ENCODE measurements at regions of chr12 and their contacts with region 1.

Region 1: GRCh38 chr12:89542912-89543592 is 17.2 kb upstream of the POC1B start:
- DNase-seq: peak; percentile 67 to 89 (median 70)
- ATAC-seq: peak; percentile 81
- H3K4me3 ChIP-seq: no peak overlapping the region
- H3K27ac ChIP-seq: no peak overlapping the region
- H3K4me1 ChIP-seq: peaks cover 11 to 48% of the 10 kb centered on the region in 2 experiments
- H3K27me3 ChIP-seq: no peaks in the 10 kb centered on the region
- CTCF ChIP-seq: peak; percentile 77 to 92 (median 84)
- EP300 ChIP-seq: no peak
- POLR2A ChIP-seq: no peak
- RAD21 ChIP-seq: peak; percentile 95

Region 2: DNA sequence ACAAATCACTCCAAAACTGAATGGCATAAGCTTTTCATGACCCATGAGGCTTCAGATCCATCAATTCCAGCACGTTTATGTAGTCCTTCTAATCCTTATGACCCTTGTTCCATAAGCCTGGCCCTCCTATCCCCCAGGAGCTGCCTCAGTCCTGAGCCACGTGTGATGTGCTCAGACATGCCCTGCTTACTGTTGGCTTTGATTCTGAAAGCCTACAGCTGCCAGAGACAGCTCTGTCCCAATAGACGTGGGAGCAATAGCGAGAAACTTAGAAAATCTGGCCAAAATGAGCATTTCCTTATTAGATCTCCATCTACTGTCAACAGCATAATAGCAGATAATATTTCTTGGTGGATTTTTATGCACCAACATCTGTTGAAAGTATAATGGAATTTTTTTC is 223.9 kb before region 1 on chr12:
- CTCF ChIA-PET with region 1: no interaction called
- POLR2A ChIA-PET with region 1: no interaction called
- in situ Hi-C with region 1: no loop called
- intact Hi-C with region 1: no loop called
- DNase-seq: no peak
- ATAC-seq: no peak
- H3K4me3 ChIP-seq: no peak overlapping the region
- H3K27ac ChIP-seq: no peak overlapping the region
- H3K4me1 ChIP-seq: peaks cover 0 to 2% of the 10 kb centered on the region in 2 experiments; a peak in 2 of 5 replicates
- H3K27me3 ChIP-seq: no peaks in the 10 kb centered on the region
- CTCF ChIP-seq: no peak
- EP300 ChIP-seq: no peak
- POLR2A ChIP-seq: no peak
- RAD21 ChIP-seq: no peak

Region 3: GRCh38 chr12:89504560-89505346 is 38.3 kb before region 1 on chr12:
- CTCF ChIA-PET with region 1: no interaction called
- POLR2A ChIA-PET with region 1: no interaction called
- in situ Hi-C with region 1: no loop called
- intact Hi-C with region 1: no loop called
- DNase-seq: no peak
- ATAC-seq: peak; percentile 50; the same call in 1 of the 3 replicates
- H3K4me3 ChIP-seq: no peak overlapping the region
- H3K27ac ChIP-seq: no peak overlapping the region
- H3K4me1 ChIP-seq: no peaks in the 10 kb centered on the region
- H3K27me3 ChIP-seq: no peaks in the 10 kb centered on the region
- CTCF ChIP-seq: no peak
- EP300 ChIP-seq: no peak
- POLR2A ChIP-seq: no peak
- RAD21 ChIP-seq: no peak

Region 4: GRCh38 chr12:89663577-89664357 is 120.7 kb after region 1 on chr12:
- CTCF ChIA-PET with region 1: no interaction called
- POLR2A ChIA-PET with region 1: no interaction called
- in situ Hi-C with region 1: no loop called
- intact Hi-C with region 1: no loop called
- DNase-seq: peak; percentile 40 to 68 (median 50)
- ATAC-seq: peak; percentile 85
- H3K4me3 ChIP-seq: no peak overlapping the region
- H3K27ac ChIP-seq: peak overlapping the region; percentile 72
- H3K4me1 ChIP-seq: peaks cover 0 to 31% of the 10 kb centered on the region in 2 experiments; a peak in 4 of 5 replicates
- H3K27me3 ChIP-seq: no peaks in the 10 kb centered on the region
- CTCF ChIP-seq: no peak
- EP300 ChIP-seq: peak; percentile 80
- POLR2A ChIP-seq: no peak
- RAD21 ChIP-seq: 0 out of 4 replicates have a peak, but pooled peaks of 1 of the 2 experiments have one; percentile 17

Region 5: DNA sequence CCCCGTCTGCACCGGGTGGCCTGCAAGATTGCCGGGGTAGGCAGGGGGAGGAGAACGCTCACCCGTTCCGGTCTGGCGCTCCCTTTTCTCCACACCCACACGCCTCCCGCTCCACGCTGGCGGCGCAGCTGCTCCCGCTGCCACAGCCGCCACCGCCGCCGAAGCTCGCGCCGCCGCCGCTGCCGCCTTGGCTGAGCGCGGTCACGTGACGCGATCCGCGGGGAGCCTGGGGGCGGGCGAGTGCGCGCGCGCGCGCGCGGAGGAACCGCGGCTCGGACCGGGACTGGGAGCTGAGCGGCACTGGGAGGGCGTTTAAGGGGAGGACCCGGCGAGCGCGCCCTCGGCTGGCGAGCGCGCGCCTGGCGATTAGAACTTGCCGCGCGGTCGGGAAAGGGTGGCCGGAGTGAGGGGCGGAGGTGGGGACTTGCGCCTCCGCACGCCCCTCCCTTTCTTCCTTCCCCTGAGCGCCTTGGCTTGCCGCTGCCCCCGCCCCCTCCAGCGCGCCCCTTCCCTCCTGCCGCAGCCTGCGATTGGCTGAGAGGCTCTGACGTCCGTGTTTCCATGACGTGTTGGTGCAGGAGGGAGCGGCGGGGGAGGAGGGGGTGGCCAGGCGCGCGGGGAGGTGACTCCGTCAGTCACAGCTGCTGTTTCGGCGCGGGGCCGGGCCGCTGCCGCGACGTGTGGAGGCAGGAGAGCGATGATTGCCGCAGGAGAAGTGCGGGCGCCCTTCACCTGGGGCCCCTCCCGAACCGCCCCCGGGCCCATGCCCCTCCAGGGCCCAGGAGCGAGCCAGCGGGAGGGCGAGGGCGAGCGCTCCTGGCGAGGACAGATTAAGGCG is 166.3 kb after region 1 on chr12:
- CTCF ChIA-PET with region 1: no interaction called
- POLR2A ChIA-PET with region 1: interaction called, 8 read pairs
- in situ Hi-C with region 1: no loop called
- intact Hi-C with region 1: loop called (anchors 2 kb)
- DNase-seq: peak; percentile 96 to 98 (median 98)
- ATAC-seq: peak; percentile 89
- H3K4me3 ChIP-seq: peak overlapping the region; percentile 75
- H3K27ac ChIP-seq: peak overlapping the region; percentile 94
- H3K4me1 ChIP-seq: peaks cover 12 to 26% of the 10 kb centered on the region in 2 experiments; a peak in 4 of 5 replicates
- H3K27me3 ChIP-seq: no peaks in the 10 kb centered on the region
- CTCF ChIP-seq: 0 out of 6 replicates have a peak, but pooled peaks of 1 of the 3 experiments have one; percentile 4
- EP300 ChIP-seq: peak; percentile 21; the same call in 1 of the 2 replicates
- POLR2A ChIP-seq: peak; percentile 70
- RAD21 ChIP-seq: no peak; a peak in 2 of 4 replicates

Region 6: DNA sequence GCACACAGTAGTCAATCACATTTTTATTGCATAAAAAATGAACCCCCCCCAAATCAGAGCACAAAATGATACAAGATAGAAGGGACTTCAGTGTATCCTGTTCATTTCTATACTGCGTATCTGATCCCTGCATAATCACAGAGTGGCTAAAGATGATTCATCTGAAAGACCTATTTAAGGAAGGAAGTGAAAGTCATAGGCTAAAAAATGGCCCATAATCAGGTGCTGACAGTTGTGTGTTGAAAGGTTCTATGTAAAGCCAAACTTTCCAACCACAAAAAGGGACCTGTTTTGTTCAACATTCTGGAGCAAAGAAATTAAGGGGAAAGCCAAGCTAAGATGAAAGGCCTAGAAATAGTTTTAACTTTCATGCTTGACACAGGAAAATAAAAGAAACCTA is 313.4 kb after region 1 on chr12:
- CTCF ChIA-PET with region 1: no interaction called
- POLR2A ChIA-PET with region 1: no interaction called
- in situ Hi-C with region 1: no loop called
- intact Hi-C with region 1: loop called (anchors 10 kb)
- DNase-seq: peak in 1 of 4 experiments; percentile 19
- ATAC-seq: peak; percentile 51; the same call in 1 of the 3 replicates
- H3K4me3 ChIP-seq: no peak overlapping the region
- H3K27ac ChIP-seq: no peak overlapping the region
- H3K4me1 ChIP-seq: no peaks in the 10 kb centered on the region; a peak in 1 of 5 replicates
- H3K27me3 ChIP-seq: no peaks in the 10 kb centered on the region
- CTCF ChIP-seq: no peak
- EP300 ChIP-seq: peak; percentile 64
- POLR2A ChIP-seq: no peak
- RAD21 ChIP-seq: peak in 1 of 2 experiments; percentile 24; a peak in 2 of 4 replicates

Region 7: DNA sequence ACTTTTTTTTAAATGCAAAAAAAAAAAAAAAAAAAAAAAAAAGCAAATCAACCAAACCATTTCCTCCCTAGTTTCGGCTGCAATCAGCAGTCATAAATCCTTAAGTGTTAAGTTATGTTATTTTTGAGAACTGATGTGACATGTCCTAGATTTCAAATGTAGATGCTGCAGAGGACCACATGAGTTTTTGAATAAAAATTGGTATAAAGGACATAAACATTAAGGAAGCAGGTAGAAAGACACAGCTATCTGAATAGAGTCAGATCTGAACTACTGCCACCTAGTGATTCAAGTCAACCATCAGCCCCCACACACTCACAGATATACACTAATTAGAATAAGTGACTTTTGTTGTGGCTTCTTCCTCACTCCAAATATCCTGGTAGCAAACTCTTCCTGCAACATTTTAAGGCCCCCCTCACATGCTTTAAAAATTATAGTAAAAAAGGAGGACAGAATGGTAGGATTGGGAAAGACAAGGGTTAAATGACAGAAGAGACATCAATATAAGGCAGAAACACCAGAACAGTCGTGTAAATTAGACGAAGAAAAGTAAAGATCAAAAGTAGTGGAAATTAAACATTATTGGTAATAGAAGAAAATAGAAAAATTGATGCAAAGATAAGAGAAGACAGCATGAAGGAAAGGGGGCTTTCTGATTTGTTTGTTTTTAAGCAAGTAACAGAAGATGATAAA is 560.1 kb after region 1 on chr12:
- CTCF ChIA-PET with region 1: interaction called, 5 read pairs
- POLR2A ChIA-PET with region 1: no interaction called
- in situ Hi-C with region 1: loop called (anchors 5 kb)
- intact Hi-C with region 1: loop called (anchors 1 kb)
- DNase-seq: peak in 2 of 4 experiments; percentile 17 to 21
- ATAC-seq: peak; percentile 70
- H3K4me3 ChIP-seq: no peak overlapping the region
- H3K27ac ChIP-seq: no peak overlapping the region
- H3K4me1 ChIP-seq: no peaks in the 10 kb centered on the region
- H3K27me3 ChIP-seq: no peaks in the 10 kb centered on the region
- CTCF ChIP-seq: peak in 2 of 3 experiments; percentile 36 to 39; a peak in 3 of 6 replicates
- EP300 ChIP-seq: no peak
- POLR2A ChIP-seq: no peak
- RAD21 ChIP-seq: peak in 1 of 2 experiments; percentile 64; a peak in 3 of 4 replicates

Region 8: DNA sequence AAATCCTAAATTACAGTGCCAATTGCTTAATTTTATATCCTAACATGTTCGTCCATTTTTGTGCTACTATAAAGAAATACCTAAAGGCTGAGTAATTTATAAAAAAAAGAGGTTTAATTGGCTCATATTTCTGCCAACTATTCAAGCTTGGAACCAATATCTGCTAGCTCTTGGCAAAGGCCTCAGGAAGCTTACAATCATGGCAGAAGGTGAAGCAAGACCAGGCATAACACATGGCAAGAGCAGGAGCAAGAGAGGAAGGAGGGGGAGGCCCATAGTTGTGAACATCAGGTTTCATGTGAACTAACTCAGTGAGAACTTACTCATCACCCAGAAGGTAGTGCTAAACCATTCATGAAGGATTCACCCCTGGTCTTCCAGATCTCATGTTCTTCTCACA is 917.6 kb after region 1 on chr12:
- CTCF ChIA-PET with region 1: no interaction called
- POLR2A ChIA-PET with region 1: no interaction called
- in situ Hi-C with region 1: no loop called
- intact Hi-C with region 1: no loop called
- DNase-seq: no peak
- ATAC-seq: no peak
- H3K4me3 ChIP-seq: no peak overlapping the region
- H3K27ac ChIP-seq: no peak overlapping the region
- H3K4me1 ChIP-seq: no peaks in the 10 kb centered on the region
- H3K27me3 ChIP-seq: no peaks in the 10 kb centered on the region
- CTCF ChIP-seq: no peak
- EP300 ChIP-seq: no peak
- POLR2A ChIP-seq: no peak
- RAD21 ChIP-seq: no peak

Region 9: DNA sequence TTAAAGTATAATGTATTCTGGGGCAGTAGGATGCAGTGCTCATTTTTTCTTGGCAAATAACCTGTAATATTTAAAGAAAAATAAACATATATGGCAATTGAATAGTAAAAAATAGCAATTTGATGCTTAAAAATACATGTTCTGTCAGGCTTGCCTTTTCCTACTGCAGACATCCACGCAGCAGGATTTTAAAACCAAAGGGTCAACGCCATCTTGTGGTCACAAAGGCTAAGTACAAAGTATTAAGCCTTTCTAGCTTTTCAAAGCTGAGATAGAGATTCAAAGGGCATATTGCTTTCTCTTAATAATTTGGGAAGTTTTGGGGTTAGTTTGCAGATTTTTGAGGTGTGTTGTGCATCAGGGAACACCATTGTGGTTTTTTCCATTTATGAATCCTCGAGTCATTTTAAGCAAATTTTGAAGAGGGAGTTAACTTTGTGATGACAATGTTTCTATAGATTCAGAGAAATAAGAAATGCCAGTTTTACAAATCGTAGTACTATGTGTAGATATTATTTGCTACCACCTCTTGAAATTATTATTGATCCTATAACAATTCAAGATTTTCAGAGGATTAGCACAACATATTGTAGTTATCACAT is 1416.6 kb after region 1 on chr12:
- CTCF ChIA-PET with region 1: no interaction called
- POLR2A ChIA-PET with region 1: no interaction called
- in situ Hi-C with region 1: no loop called
- intact Hi-C with region 1: loop called (anchors 5 kb)
- DNase-seq: peak; percentile 13 to 50 (median 28)
- ATAC-seq: peak; percentile 82
- H3K4me3 ChIP-seq: no peak overlapping the region
- H3K27ac ChIP-seq: no peak overlapping the region
- H3K4me1 ChIP-seq: peaks cover 0 to 3% of the 10 kb centered on the region in 2 experiments; a peak in 1 of 5 replicates
- H3K27me3 ChIP-seq: no peaks in the 10 kb centered on the region
- CTCF ChIP-seq: peak; percentile 62 to 67 (median 66)
- EP300 ChIP-seq: no peak
- POLR2A ChIP-seq: no peak
- RAD21 ChIP-seq: peak; percentile 43 to 66; a peak in 3 of 4 replicates

Measured in K562 (cell line).